SK-N-SH (cell line): ENCODE measurements at regions of chr13 and their contacts with region 1.

Region 1: GRCh38 chr13:53151336-53152056 is 122.9 kb downstream of the OLFM4 start:
- DNase-seq: peak; percentile 54
- H3K4me3 ChIP-seq: peak overlapping the region in 1 of 2 experiments; percentile 51; a peak in 1 of 4 replicates
- H3K27ac ChIP-seq: no peak overlapping the region
- H3K4me1 ChIP-seq: no peaks in the 10 kb centered on the region; a peak in 1 of 4 replicates
- H3K27me3 ChIP-seq: no peaks in the 10 kb centered on the region
- CTCF ChIP-seq: peak; percentile 82
- EP300 ChIP-seq: no peak
- RAD21 ChIP-seq: peak; percentile 89

Region 2: GRCh38 chr13:52850396-52851136 is 300.9 kb before region 1 on chr13:
- CTCF ChIA-PET with region 1: interaction called, 42 read pairs
- POLR2A ChIA-PET with region 1: no interaction called
- DNase-seq: peak; percentile 71
- H3K4me3 ChIP-seq: peak overlapping the region; percentile 69 to 97
- H3K27ac ChIP-seq: peak overlapping the region in 1 of 2 experiments; percentile 79; a peak in 2 of 4 replicates
- H3K4me1 ChIP-seq: peaks cover 6 to 34% of the 10 kb centered on the region in 2 experiments; a peak in 3 of 4 replicates
- H3K27me3 ChIP-seq: peaks cover 37% of the 10 kb centered on the region
- CTCF ChIP-seq: peak; percentile 26; the same call in 1 of the 2 replicates
- EP300 ChIP-seq: no peak
- RAD21 ChIP-seq: no peak

Region 3: DNA sequence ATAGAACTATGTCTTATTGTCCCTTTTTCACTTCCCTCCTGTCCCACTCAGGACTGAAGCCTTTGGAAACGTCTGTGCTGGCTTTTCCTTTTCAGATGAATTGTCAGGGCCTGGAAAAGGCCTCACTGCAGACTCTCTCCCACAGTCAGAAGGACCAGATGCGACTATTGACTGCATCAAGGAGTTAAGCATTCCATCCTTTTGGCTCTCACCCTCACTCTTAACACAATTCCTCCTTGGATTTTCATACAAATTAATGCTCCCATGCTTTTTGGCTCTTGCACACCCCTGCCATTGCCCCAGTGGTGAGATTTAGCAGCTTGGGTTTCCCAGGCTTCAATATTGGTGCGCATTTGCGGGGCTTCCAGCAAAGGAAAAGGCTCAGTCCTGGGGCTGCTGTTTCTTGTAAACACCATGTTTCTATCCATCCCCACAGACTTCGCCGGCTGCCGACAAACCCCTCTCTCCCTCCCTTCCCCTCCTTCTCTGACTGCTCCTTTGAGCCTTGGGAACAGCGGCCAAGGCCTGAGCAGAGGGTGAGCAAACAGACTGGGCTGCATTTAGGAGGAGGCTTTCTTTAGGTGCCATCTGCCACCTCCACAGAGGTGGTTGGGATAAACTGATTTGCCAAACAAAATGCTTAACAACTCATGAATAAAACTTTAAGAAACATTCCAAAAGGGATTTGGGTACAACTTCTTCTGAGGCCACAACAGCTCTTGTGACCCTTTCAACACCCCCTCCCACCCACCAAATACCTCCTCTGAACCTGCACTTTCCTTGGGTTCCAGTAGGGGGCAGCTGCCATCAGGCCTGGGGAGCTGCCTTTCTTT is 254.5 kb before region 1 on chr13:
- CTCF ChIA-PET with region 1: interaction called, 10 read pairs
- POLR2A ChIA-PET with region 1: no interaction called
- DNase-seq: peak; percentile 61
- H3K4me3 ChIP-seq: no peak overlapping the region
- H3K27ac ChIP-seq: no peak overlapping the region
- H3K4me1 ChIP-seq: no peaks in the 10 kb centered on the region
- H3K27me3 ChIP-seq: no peaks in the 10 kb centered on the region
- CTCF ChIP-seq: peak; percentile 62
- EP300 ChIP-seq: no peak
- RAD21 ChIP-seq: peak; percentile 49

Region 4: DNA sequence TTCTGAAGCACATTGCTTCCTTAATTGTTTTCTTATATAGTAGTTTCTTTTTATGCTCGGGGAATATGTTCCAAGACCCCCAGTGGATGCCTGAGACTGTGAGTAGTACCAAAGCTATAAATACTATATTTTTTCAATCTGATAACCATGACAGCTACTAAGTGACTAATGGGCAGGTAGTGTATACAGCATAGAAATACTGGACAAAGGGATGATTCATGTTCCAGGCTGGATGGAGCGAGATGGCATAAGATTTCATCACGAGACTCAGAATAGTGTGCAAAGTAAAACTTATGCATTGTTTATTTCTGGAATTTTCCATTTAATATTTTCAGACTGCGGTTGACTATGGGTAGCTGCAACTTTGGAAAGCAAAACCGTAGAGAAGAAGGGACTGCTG is 170.8 kb before region 1 on chr13:
- CTCF ChIA-PET with region 1: interaction called, 12 read pairs
- POLR2A ChIA-PET with region 1: no interaction called
- DNase-seq: no peak
- H3K4me3 ChIP-seq: no peak overlapping the region; a peak in 1 of 4 replicates
- H3K27ac ChIP-seq: peak overlapping the region in 1 of 2 experiments; percentile 51; a peak in 2 of 4 replicates
- H3K4me1 ChIP-seq: no peaks in the 10 kb centered on the region; a peak in 1 of 4 replicates
- H3K27me3 ChIP-seq: no peaks in the 10 kb centered on the region
- CTCF ChIP-seq: no peak
- EP300 ChIP-seq: no peak
- RAD21 ChIP-seq: no peak

Region 5: GRCh38 chr13:53068585-53069520 is 82.6 kb before region 1 on chr13:
- CTCF ChIA-PET with region 1: interaction called, 20 read pairs
- POLR2A ChIA-PET with region 1: no interaction called
- DNase-seq: peak; percentile 51
- H3K4me3 ChIP-seq: no peak overlapping the region
- H3K27ac ChIP-seq: peak overlapping the region in 1 of 2 experiments; percentile 78; a peak in 1 of 4 replicates
- H3K4me1 ChIP-seq: peaks cover 0 to 28% of the 10 kb centered on the region in 2 experiments; a peak in 2 of 4 replicates
- H3K27me3 ChIP-seq: no peaks in the 10 kb centered on the region
- CTCF ChIP-seq: no peak
- EP300 ChIP-seq: 0 out of 4 replicates have a peak, but pooled peaks of 1 of the 2 experiments have one; percentile 71
- RAD21 ChIP-seq: peak; percentile 56

Region 6: DNA sequence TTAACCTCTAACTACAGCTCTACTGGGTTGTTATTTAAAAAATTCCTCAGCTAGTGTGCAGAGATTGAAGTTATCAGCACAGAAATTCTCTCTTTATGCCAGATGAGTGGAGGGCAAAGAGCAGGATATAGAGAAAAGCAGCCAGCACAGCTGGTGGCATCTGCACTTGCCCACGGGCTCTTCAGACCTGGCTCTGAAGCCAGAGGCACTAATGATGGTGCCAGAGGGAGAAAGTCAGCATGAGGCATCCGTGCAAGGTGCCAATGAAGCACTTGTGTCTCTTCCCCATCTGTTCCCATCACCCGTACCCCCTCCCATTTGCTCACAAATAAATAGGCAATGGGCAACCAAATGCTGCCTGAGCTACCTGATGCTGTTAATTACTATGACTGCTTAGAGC is 16.1 kb after region 1 on chr13:
- CTCF ChIA-PET with region 1: interaction called, 20 read pairs
- POLR2A ChIA-PET with region 1: no interaction called
- DNase-seq: no peak
- H3K4me3 ChIP-seq: no peak overlapping the region
- H3K27ac ChIP-seq: no peak overlapping the region
- H3K4me1 ChIP-seq: no peaks in the 10 kb centered on the region; a peak in 1 of 4 replicates
- H3K27me3 ChIP-seq: no peaks in the 10 kb centered on the region
- CTCF ChIP-seq: no peak
- EP300 ChIP-seq: no peak
- RAD21 ChIP-seq: no peak